ENCODE measurements at regions of chr6 and their contacts with region 1.

Region 1: DNA sequence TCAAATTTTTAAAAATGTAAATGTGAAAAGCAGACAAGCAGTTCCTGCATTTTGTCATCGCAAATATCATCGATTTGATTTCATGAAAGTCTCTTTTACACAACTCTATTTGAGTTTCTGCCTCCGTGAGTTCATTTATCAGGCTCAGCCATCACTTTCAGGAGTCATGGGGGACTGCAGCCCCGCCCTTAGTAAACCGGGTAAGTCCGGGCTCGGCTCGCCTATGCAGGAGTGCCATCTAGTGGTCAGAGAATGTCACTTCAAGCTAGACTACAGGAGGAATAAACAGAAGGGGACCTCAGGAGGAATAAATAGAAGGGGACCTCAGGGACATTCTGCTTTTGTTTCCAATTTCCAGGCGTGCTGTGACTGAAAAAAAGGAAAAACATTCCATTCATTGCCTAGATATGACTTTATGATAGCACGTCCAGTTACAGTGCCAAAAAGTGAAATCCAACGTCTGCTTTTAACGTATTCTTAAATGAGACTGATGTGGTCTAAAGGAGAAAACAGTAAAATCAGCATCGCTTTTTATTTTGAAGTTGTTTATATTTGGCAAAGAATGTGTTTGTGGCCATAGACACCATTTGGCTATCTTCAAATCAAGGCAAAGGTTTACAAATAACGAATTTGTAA is 333.9 kb downstream of the HACE1 start:
- DNase-seq: peak; percentile 62
- H3K4me3 ChIP-seq: peak overlapping the region; percentile 30 to 44 (median 36)
- H3K27ac ChIP-seq: no peak overlapping the region
- H3K4me1 ChIP-seq: no peaks in the 10 kb centered on the region
- H3K27me3 ChIP-seq: no peaks in the 10 kb centered on the region
- CTCF ChIP-seq: peak; percentile 84 to 97

Region 2: GRCh38 chr6:103122766-103123601 is 1402.8 kb before region 1 on chr6:
- CTCF ChIA-PET with region 1: no interaction called
- dilution Hi-C with region 1: no loop called
- in situ Hi-C with region 1: no loop called
- intact Hi-C with region 1: loop called (anchors 5 kb)
- DNase-seq: peak; percentile 25
- H3K4me3 ChIP-seq: no peak overlapping the region
- H3K27ac ChIP-seq: no peak overlapping the region
- H3K4me1 ChIP-seq: no peaks in the 10 kb centered on the region
- H3K27me3 ChIP-seq: no peaks in the 10 kb centered on the region
- CTCF ChIP-seq: peak; percentile 63 to 80

Region 3: DNA sequence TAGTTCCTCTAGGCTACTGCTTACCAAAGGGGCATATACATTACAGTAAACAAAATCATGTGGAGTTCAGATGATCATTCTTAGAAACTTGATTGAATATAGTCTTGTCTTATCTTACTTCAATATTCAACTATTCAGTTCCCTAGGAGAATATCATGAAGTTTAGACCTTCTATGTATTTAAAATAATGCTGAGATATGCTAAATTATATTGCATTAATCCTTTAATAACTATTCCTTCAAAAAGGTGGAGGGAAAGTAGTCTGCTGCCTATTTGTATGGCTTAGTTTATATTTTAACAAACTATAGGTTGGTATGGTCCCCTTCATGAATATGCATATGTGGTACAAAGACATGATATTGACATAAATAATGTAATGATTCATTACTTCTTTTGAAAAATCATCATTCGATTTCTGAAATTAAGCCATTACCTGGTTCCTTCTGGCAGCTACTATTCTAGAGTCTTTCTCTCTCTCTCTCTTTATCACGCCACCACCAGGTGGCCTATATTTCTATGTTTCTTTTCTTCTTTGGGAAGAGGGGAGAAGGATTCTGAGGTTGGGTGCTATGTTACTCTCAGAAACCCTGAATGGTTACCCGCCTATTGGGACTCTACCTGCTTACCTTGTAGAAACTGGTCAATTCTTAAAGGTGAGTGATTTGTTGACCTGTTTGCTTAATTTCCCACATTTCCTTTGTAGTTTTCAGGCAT is 521.8 kb before region 1 on chr6:
- CTCF ChIA-PET with region 1: no interaction called
- dilution Hi-C with region 1: no loop called
- in situ Hi-C with region 1: no loop called
- intact Hi-C with region 1: loop called (anchors 1 kb)
- DNase-seq: no peak
- H3K4me3 ChIP-seq: no peak overlapping the region
- H3K27ac ChIP-seq: no peak overlapping the region
- H3K4me1 ChIP-seq: no peaks in the 10 kb centered on the region
- H3K27me3 ChIP-seq: no peaks in the 10 kb centered on the region
- CTCF ChIP-seq: peak in 1 of 2 donors; percentile 36

Region 4: GRCh38 chr6:104325341-104326172 is 200.2 kb before region 1 on chr6:
- CTCF ChIA-PET with region 1: no interaction called
- dilution Hi-C with region 1: no loop called
- in situ Hi-C with region 1: no loop called
- intact Hi-C with region 1: loop called (anchors 2 kb)
- DNase-seq: peak; percentile 4
- H3K4me3 ChIP-seq: no peak overlapping the region
- H3K27ac ChIP-seq: no peak overlapping the region
- H3K4me1 ChIP-seq: peaks cover 9% of the 10 kb centered on the region
- H3K27me3 ChIP-seq: peaks cover 2% of the 10 kb centered on the region
- CTCF ChIP-seq: peak; percentile 56 to 72

Region 5: GRCh38 chr6:104682722-104683643 is 157.2 kb after region 1 on chr6:
- CTCF ChIA-PET with region 1: no interaction called
- dilution Hi-C with region 1: no loop called
- in situ Hi-C with region 1: no loop called
- intact Hi-C with region 1: loop called (anchors 5 kb)
- DNase-seq: peak; percentile 14
- H3K4me3 ChIP-seq: no peak overlapping the region
- H3K27ac ChIP-seq: no peak overlapping the region
- H3K4me1 ChIP-seq: no peaks in the 10 kb centered on the region
- H3K27me3 ChIP-seq: no peaks in the 10 kb centered on the region
- CTCF ChIP-seq: peak; percentile 89 to 93

Measured in mammary epithelial cell (primary cell).